Heart right ventricle (tissue), 16 donors: ENCODE measurements at regions of chr1 and their contacts with region 1.

Region 1: GRCh38 chr1:210400043-210400840 is 71.5 kb downstream of the HHAT start:
- DNase-seq: peak; percentile 27 to 52
- ATAC-seq: peak; percentile 81 to 94 (median 88)
- H3K4me3 ChIP-seq: no peak overlapping the region
- H3K27ac ChIP-seq: no peak overlapping the region
- H3K4me1 ChIP-seq: peaks cover 0 to 8% (median 0%) of the 10 kb centered on the region in 9 donors
- H3K27me3 ChIP-seq: no peaks in the 10 kb centered on the region
- CTCF ChIP-seq: peak; percentile 51 to 86 (median 81)

Region 2: GRCh38 chr1:209743145-209743482 is 657.1 kb before region 1 on chr1:
- intact Hi-C with region 1: no loop called
- DNase-seq: peak in 1 of 2 donors; percentile 37
- ATAC-seq: peak in 3 of 8 donors; percentile 2 to 34 (median 4)
- H3K4me3 ChIP-seq: no peak overlapping the region
- H3K27ac ChIP-seq: peak overlapping the region in 9 of 10 donors; percentile 71 to 92 (median 83)
- H3K4me1 ChIP-seq: peaks cover 5 to 55% (median 34%) of the 10 kb centered on the region in 9 donors
- H3K27me3 ChIP-seq: no peaks in the 10 kb centered on the region
- CTCF ChIP-seq: no peak

Region 3: GRCh38 chr1:209860293-209860881 is 539.9 kb before region 1 on chr1:
- intact Hi-C with region 1: loop called in 2 of 10 experiments (anchors 10 kb)
- DNase-seq: peak; percentile 58 to 60
- ATAC-seq: peak in 6 of 8 donors; percentile 59 to 81 (median 78)
- H3K4me3 ChIP-seq: no peak overlapping the region
- H3K27ac ChIP-seq: no peak overlapping the region
- H3K4me1 ChIP-seq: no peaks in the 10 kb centered on the region
- H3K27me3 ChIP-seq: peaks cover 0 to 33% (median 22%) of the 10 kb centered on the region in 7 donors
- CTCF ChIP-seq: peak; percentile 66 to 96 (median 87)

Region 4: GRCh38 chr1:210301615-210302000 is 98.6 kb before region 1 on chr1:
- intact Hi-C with region 1: loop called in 1 of 10 experiments (anchors 10 kb)
- DNase-seq: no peak
- ATAC-seq: peak in 4 of 8 donors; percentile 13 to 62 (median 38)
- H3K4me3 ChIP-seq: no peak overlapping the region
- H3K27ac ChIP-seq: peak overlapping the region in 2 of 10 donors; percentile 5 to 36
- H3K4me1 ChIP-seq: peaks cover 0 to 40% (median 9%) of the 10 kb centered on the region in 9 donors
- H3K27me3 ChIP-seq: no peaks in the 10 kb centered on the region
- CTCF ChIP-seq: no peak

Region 5: DNA sequence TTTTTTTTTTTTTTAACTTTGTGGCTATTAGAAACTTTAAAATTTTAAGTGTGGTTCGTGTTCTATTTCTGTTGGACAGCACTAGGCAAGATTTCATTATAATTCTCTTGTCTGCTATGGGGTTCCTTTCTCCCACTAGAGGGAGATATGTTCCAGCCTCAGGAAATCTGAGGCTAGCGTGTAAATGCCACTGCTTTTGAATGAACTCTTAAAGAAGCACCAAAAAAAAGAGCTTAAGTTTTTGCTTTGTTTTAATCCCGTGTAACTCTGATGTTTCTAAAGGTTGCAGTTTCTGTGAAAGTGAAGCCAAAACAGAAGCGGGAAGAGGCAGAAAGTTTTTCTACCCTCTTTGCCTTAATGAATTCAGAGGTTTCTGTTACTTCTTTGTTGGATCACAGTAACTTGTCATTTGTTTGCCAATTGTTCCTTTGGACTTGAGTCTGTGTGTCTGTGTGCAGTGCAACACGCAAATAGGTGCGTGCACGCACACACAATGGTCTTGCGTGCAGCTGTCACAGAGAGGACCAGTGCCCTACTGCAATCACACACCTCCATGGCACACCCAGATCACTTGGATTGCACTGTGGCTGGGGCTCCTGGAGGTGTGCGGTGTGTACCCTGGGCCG is 39.3 kb before region 1 on chr1:
- intact Hi-C with region 1: loop called in 7 of 10 experiments (anchors 2 to 5 kb)
- DNase-seq: no peak
- ATAC-seq: peak in 7 of 8 donors; percentile 24 to 60 (median 56)
- H3K4me3 ChIP-seq: no peak overlapping the region
- H3K27ac ChIP-seq: peak overlapping the region in 2 of 10 donors; percentile 42 to 44
- H3K4me1 ChIP-seq: peaks cover 0 to 26% (median 11%) of the 10 kb centered on the region in 9 donors
- H3K27me3 ChIP-seq: no peaks in the 10 kb centered on the region
- CTCF ChIP-seq: peak; percentile 40 to 74 (median 62)

Region 6: GRCh38 chr1:211476200-211476849 is 1076.1 kb after region 1 on chr1:
- intact Hi-C with region 1: loop called in 1 of 10 experiments (anchors 10 kb)
- DNase-seq: peak; percentile 44 to 67
- ATAC-seq: peak in 4 of 8 donors; percentile 43 to 64 (median 57)
- H3K4me3 ChIP-seq: no peak overlapping the region
- H3K27ac ChIP-seq: no peak overlapping the region
- H3K4me1 ChIP-seq: peaks cover 0 to 9% (median 5%) of the 10 kb centered on the region in 9 donors
- H3K27me3 ChIP-seq: peaks cover 0 to 32% (median 20%) of the 10 kb centered on the region in 7 donors
- CTCF ChIP-seq: peak; percentile 54 to 92 (median 80)